ENCODE measurements at regions of chr5 and their contacts with region 1.

Region 1: GRCh38 chr5:80225934-80226326 is 29.9 kb downstream of the SERINC5 start:
- DNase-seq: peak in 3 of 35 experiments; percentile 31 to 40 (median 32)
- ATAC-seq: peak; percentile 31 to 68 (median 44)
- H3K4me3 ChIP-seq: no peak overlapping the region
- H3K4me3 Mint-ChIP-seq: peak overlapping the region; percentile 18 to 69 (median 34)
- H3K27ac ChIP-seq: no peak overlapping the region
- H3K27ac Mint-ChIP-seq: peak overlapping the region; percentile 78 to 84
- H3K4me1 ChIP-seq: peaks cover 40 to 53% of the 10 kb centered on the region in 2 experiments
- H3K4me1 Mint-ChIP-seq: peaks cover 67 to 76% (median 70%) of the 10 kb centered on the region in 3 donors
- H3K27me3 ChIP-seq: no peaks in the 10 kb centered on the region
- H3K27me3 Mint-ChIP-seq: no peaks in the 10 kb centered on the region

Region 2: DNA sequence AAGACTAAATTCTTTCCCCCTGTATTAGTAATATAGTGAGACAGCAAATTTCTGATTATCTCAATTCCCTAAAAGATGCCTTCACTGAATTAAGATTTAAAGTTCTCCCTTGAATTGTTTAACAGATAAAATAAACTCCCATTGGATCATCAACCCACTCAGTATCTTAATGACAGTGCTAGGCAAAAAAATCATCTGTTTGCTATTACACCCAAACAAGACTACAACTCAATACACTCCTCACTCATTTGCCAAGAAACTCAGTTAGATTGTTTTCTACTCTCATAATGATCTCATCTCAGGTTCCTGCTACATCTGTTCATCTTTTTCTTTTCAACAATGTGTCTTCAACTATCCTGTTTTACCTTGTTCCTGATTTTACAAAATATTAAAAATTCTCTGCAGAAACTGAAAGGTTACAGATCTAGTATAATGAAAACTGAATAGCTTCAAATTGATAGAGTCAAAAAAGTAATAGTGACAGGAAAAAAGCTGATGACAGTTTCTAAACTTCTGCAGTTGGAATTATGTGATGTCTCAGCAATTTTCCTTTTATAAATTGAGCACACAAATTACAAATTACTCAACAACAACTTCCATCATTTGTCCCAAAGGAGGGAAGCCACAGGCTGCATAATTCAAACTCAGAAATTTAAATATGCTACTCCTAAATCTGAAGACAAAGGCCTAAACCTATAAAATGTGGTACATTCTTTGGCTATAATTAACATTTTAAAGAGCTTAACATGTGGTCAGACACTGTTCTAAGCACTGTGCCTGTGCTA is 751.4 kb before region 1 on chr5:
- CTCF ChIA-PET with region 1: interaction called in 1 of 2 experiments, 13 read pairs
- POLR2A ChIA-PET with region 1: no interaction called
- DNase-seq: no peak
- ATAC-seq: no peak
- H3K4me3 ChIP-seq: no peak overlapping the region
- H3K4me3 Mint-ChIP-seq: no peak overlapping the region
- H3K27ac ChIP-seq: no peak overlapping the region
- H3K27ac Mint-ChIP-seq: no peak overlapping the region
- H3K4me1 ChIP-seq: no peaks in the 10 kb centered on the region
- H3K4me1 Mint-ChIP-seq: no peaks in the 10 kb centered on the region
- H3K27me3 ChIP-seq: no peaks in the 10 kb centered on the region
- H3K27me3 Mint-ChIP-seq: no peaks in the 10 kb centered on the region

Region 3: DNA sequence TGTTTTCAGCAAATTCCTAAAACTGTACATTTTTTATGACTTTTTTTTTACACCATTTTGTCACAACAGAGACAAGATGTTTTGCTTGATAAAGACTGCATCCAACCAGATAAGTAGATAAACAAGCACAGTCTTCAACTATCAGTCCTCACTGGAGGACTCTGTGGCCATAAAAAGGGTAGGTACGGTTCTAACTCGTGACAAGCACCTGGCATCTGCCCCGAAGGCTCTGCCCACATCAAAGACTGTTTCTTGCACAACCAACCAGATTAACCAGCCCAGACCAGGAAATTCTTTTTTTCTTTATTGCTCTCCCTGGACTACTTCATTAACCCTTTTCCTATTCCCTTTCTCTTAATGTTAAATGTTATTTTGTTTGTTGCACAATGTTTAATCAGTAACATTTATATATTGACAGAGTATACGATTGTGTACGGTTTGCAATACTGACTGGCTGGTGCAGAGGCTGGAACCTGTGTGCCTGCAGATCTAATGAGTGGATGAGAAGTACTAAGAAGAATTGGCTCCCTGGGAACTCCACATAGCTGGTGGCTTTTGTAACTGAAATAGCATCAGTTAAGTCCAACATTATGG is 44.2 kb before region 1 on chr5:
- CTCF ChIA-PET with region 1: no interaction called
- POLR2A ChIA-PET with region 1: interaction called in 1 of 2 experiments, 10 read pairs
- DNase-seq: peak in 30 of 35 experiments; percentile 25 to 82 (median 42)
- ATAC-seq: peak; percentile 66 to 77 (median 75)
- H3K4me3 ChIP-seq: peak overlapping the region in 1 of 2 donors; percentile 5
- H3K4me3 Mint-ChIP-seq: peak overlapping the region; percentile 40 to 64 (median 50)
- H3K27ac ChIP-seq: peak overlapping the region; percentile 63
- H3K27ac Mint-ChIP-seq: peak overlapping the region; percentile 88 to 93
- H3K4me1 ChIP-seq: peaks cover 73% of the 10 kb centered on the region in 2 experiments
- H3K4me1 Mint-ChIP-seq: peaks cover 89 to 93% (median 90%) of the 10 kb centered on the region in 3 donors
- H3K27me3 ChIP-seq: no peaks in the 10 kb centered on the region
- H3K27me3 Mint-ChIP-seq: no peaks in the 10 kb centered on the region

Region 4: DNA sequence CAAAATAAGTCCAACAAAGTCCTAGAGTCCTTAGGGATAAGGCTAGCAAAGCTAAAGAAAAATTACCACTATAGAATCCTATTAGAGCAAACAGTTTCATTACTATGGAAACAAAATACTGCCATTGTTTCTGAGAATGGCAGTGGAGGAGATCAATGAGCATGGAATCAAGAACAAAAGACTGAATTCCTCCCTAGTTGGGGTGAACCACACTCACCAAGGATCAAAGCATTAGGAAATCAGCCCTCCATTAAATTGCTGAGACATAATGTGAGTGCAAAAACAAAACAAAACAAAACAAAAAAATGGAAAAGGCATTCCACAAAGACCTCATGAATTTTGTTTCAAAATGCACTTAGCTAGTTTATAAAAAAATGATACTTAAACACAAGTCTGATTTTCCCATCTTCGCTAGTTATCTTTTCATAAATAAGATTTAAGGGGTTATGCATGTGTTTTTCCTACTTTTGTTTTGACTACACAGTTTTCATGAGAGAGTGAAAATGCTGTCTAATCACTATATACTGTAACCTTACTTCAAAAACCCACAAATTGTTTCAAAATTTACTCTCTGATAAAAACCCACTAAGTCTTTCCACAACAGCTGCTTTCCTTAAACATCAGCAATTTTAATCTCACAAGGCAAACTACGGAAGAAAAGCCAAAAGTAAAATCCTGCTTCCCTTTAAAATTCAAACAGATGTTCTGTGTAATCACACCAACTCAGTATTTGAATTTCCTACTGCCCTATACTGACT is 20.2 kb after region 1 on chr5:
- CTCF ChIA-PET with region 1: no interaction called
- POLR2A ChIA-PET with region 1: no interaction called
- DNase-seq: peak in 1 of 35 experiments; percentile 29
- ATAC-seq: peak in 1 of 4 experiments; percentile 23
- H3K4me3 ChIP-seq: no peak overlapping the region
- H3K4me3 Mint-ChIP-seq: peak overlapping the region; percentile 26 to 66 (median 63)
- H3K27ac ChIP-seq: peak overlapping the region; percentile 9
- H3K27ac Mint-ChIP-seq: peak overlapping the region; percentile 77 to 86
- H3K4me1 ChIP-seq: peaks cover 33 to 59% of the 10 kb centered on the region in 2 experiments
- H3K4me1 Mint-ChIP-seq: peaks cover 67 to 79% (median 78%) of the 10 kb centered on the region in 3 donors
- H3K27me3 ChIP-seq: no peaks in the 10 kb centered on the region
- H3K27me3 Mint-ChIP-seq: no peaks in the 10 kb centered on the region

Measured in T-cell (primary cell).